H1 (cell line): ENCODE measurements at regions of chr3 and their contacts with region 1.

Region 1: DNA sequence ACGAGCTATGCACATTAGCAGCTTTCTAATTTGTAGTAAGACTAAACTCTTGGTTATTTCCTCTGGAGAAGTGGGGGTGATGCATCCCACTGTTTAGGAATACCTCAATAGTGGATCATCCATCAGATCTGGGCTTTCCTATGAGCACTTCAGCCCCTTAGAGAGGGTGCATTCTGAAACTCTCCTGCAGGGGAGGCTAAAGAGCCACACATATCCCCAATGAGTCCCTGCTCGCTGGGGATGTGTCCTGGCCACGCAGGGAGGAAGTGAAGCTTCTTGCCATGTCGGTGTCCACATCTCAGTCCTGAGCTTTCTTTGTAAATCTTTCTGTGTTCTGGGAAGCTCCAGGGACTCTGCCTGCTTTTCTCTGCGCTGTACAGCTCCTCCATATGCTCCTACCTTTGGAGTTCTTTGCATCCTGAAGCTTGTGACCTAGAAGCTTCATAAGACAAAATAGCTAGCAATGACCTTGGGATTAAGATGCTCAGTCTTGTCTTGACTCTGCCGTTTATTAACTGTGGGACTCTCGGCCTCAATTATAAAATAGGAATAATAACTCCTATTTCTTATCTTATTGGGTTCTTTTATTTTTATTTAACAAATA is 28.3 kb upstream of the MASP1 start:
- DNase-seq: peak; percentile 72 to 94
- H3K4me3 ChIP-seq: no peak overlapping the region
- H3K27ac ChIP-seq: no peak overlapping the region
- H3K4me1 ChIP-seq: peaks cover 0 to 4% (median 2%) of the 10 kb centered on the region in 4 experiments; a peak in 4 of 7 replicates
- H3K27me3 ChIP-seq: no peaks in the 10 kb centered on the region; a peak in 1 of 7 replicates
- CTCF ChIP-seq: peak; percentile 76 to 97 (median 95)
- EP300 ChIP-seq: no peak
- POLR2A ChIP-seq: no peak
- RAD21 ChIP-seq: peak; percentile 99 to 100

Region 2: DNA sequence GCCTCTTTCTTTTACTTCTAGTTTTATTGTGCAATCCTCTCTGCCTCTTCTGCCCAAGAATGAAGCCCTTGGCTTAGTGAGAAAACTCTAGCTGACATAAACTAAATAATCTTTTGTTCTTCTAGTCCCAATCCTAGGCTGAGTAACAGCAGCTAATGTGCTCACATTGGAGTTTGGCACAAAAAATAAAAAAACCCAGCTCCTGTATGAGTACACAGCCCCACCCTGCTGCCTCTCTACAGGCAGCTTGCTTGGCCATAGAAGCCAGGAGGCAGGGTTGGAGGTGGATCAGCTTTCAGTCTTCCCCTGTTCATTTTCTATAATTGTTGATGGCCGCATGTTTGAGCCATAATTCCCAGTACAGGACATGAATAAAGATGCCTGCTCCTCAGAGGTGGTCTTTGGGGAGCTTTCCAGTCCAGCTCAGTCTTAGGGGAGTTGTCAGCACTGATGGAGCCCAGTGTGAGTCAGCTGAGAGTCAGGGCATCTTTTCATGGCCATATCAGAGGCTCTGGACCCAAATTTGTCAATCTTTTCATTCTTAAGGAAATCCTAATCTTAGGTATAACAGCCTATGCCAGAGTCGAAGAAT is 75.8 kb before region 1 on chr3:
- CTCF ChIA-PET with region 1: interaction called, 10 read pairs
- POLR2A ChIA-PET with region 1: no interaction called
- DNase-seq: no peak
- H3K4me3 ChIP-seq: no peak overlapping the region
- H3K27ac ChIP-seq: no peak overlapping the region
- H3K4me1 ChIP-seq: no peaks in the 10 kb centered on the region
- H3K27me3 ChIP-seq: peaks cover 0 to 2% (median 0%) of the 10 kb centered on the region in 4 experiments; a peak in 2 of 7 replicates
- CTCF ChIP-seq: no peak
- EP300 ChIP-seq: no peak
- POLR2A ChIP-seq: no peak
- RAD21 ChIP-seq: no peak

Region 3: DNA sequence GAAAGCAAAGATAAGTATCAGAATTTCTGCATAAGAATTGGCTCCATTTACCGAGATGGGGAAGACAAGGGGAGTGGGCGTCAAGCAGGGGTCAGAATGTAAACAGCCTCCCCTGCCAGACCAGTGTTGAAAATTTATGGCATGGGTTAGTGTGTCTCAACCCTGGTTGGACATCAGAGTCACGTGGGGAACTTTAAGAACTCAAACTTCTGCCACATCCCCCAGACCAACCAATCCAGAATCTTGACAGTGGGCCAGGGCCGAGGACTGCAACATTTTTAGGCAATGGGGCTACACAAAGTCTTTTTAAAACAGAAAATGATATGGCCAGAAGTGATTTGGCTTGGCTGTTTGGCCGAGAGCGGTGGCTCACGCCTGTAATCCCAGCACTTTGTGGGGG is 13.9 kb before region 1 on chr3:
- CTCF ChIA-PET with region 1: interaction called, 78 read pairs
- POLR2A ChIA-PET with region 1: interaction called, 6 read pairs
- DNase-seq: no peak
- H3K4me3 ChIP-seq: no peak overlapping the region
- H3K27ac ChIP-seq: no peak overlapping the region
- H3K4me1 ChIP-seq: no peaks in the 10 kb centered on the region; a peak in 1 of 7 replicates
- H3K27me3 ChIP-seq: no peaks in the 10 kb centered on the region
- CTCF ChIP-seq: no peak
- EP300 ChIP-seq: no peak
- POLR2A ChIP-seq: no peak
- RAD21 ChIP-seq: no peak

Region 4: GRCh38 chr3:187406927-187407326 is 87.1 kb after region 1 on chr3:
- CTCF ChIA-PET with region 1: interaction called, 12 read pairs
- POLR2A ChIA-PET with region 1: no interaction called
- DNase-seq: no peak
- H3K4me3 ChIP-seq: no peak overlapping the region
- H3K27ac ChIP-seq: no peak overlapping the region
- H3K4me1 ChIP-seq: no peaks in the 10 kb centered on the region
- H3K27me3 ChIP-seq: no peaks in the 10 kb centered on the region
- CTCF ChIP-seq: no peak
- EP300 ChIP-seq: no peak
- POLR2A ChIP-seq: no peak
- RAD21 ChIP-seq: no peak

Region 5: GRCh38 chr3:187551416-187551815 is 231.6 kb after region 1 on chr3:
- CTCF ChIA-PET with region 1: interaction called, 11 read pairs
- POLR2A ChIA-PET with region 1: no interaction called
- DNase-seq: no peak
- H3K4me3 ChIP-seq: no peak overlapping the region
- H3K27ac ChIP-seq: no peak overlapping the region
- H3K4me1 ChIP-seq: no peaks in the 10 kb centered on the region
- H3K27me3 ChIP-seq: no peaks in the 10 kb centered on the region
- CTCF ChIP-seq: no peak
- EP300 ChIP-seq: no peak
- POLR2A ChIP-seq: no peak
- RAD21 ChIP-seq: no peak

Region 6: DNA sequence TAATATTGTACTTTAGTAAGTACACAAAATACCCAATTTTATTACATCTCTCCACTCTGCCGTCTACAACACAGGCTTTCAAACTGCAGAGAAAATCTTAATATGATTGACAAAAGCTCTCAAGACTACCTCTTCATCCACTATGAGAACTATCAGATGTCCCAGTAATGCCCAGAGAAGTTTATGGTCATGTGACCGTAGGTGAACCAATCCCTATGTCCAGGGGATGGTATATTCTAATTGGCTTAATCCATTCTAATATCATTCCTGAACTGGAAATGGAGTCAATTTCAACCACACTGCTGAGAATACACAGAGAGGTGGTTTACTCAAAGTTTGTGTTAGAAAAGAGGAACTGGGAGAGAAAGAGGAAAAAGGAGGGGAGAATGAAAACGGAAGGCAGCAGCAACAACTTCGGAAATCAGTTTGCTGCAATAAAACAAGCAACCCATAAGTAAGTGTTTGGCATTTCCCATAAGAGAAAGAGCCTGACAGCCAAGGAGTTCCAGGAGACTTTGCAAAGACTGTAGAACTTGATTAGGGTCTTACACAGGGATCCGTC is 343.1 kb after region 1 on chr3:
- CTCF ChIA-PET with region 1: interaction called, 947 read pairs
- POLR2A ChIA-PET with region 1: no interaction called
- DNase-seq: no peak
- H3K4me3 ChIP-seq: no peak overlapping the region
- H3K27ac ChIP-seq: no peak overlapping the region
- H3K4me1 ChIP-seq: no peaks in the 10 kb centered on the region
- H3K27me3 ChIP-seq: no peaks in the 10 kb centered on the region; a peak in 1 of 7 replicates
- CTCF ChIP-seq: no peak
- EP300 ChIP-seq: no peak
- POLR2A ChIP-seq: no peak
- RAD21 ChIP-seq: no peak